Activated T-helper 1 cell treated with anti-CD3 and anti-CD28 coated beads, Interleukin-12 subunit alpha, Interleukin-12 subunit beta, Interleukin-2, Interleukin-4 antibody, amounts not matched to agents 30 ng/mL and 10 ng/mL and 1 ng/mL, durations not matched to agents 14 hours and 24 hours and 36 hours (primary cell): ENCODE measurements at regions of chr16 and their contacts with region 1.

Region 1: GRCh38 chr16:25066747-25067631 is 44.6 kb upstream of the LCMT1 start:
- DNase-seq: peak; percentile 80
- H3K4me3 Mint-ChIP-seq: peak overlapping the region; percentile 89
- H3K27ac Mint-ChIP-seq: peak overlapping the region; percentile 88
- H3K4me1 Mint-ChIP-seq: peaks cover 40% of the 10 kb centered on the region
- H3K27me3 Mint-ChIP-seq: peaks cover 5% of the 10 kb centered on the region

Region 2: GRCh38 chr16:25031441-25032307 is 35.3 kb before region 1 on chr16:
- intact Hi-C with region 1: loop called (anchors 1 kb)
- DNase-seq: peak; percentile 88
- H3K4me3 Mint-ChIP-seq: peak overlapping the region; percentile 85
- H3K27ac Mint-ChIP-seq: peak overlapping the region; percentile 98
- H3K4me1 Mint-ChIP-seq: peaks cover 43% of the 10 kb centered on the region
- H3K27me3 Mint-ChIP-seq: peaks cover under 1% of the 10 kb centered on the region

Region 3: DNA sequence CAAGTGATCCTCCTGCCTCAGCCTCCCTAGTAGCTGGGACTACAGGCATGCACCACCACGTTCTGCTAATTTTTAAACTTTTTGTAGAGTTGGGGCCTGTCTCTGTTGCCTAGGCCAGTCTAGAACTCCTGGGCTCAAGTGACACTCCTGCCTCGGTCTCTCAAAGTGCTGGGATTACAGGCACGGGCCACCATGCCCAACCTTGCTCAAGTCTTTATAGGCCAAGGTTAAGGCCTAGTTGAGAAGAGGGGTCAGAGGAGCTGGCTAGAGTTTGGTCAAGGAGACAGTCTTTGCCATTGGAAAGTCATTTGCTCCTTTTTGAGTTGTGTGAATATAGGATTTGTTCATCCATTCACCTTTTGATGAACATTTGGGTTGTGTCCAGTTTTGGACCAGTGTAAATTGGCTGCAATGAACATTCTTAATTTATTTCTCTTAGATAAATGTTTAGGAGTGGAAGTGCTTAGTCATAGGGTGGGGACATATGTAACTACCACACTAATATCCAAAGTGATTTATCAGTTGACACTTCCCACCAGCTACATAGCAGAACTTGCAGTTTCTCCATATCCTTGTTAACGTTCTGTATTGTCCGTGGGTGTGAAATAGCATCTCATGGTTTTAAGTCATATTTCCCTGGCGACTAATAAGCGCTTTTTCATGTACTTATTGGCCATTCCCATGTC is 21.1 kb before region 1 on chr16:
- intact Hi-C with region 1: loop called (anchors 2 kb)
- DNase-seq: no peak
- H3K4me3 Mint-ChIP-seq: no peak overlapping the region
- H3K27ac Mint-ChIP-seq: peak overlapping the region; percentile 4
- H3K4me1 Mint-ChIP-seq: peaks cover 46% of the 10 kb centered on the region
- H3K27me3 Mint-ChIP-seq: no peaks in the 10 kb centered on the region

Region 4: GRCh38 chr16:25093208-25094061 is 26.4 kb after region 1 on chr16:
- intact Hi-C with region 1: loop called (anchors 1 kb)
- DNase-seq: no peak
- H3K4me3 Mint-ChIP-seq: peak overlapping the region; percentile 56
- H3K27ac Mint-ChIP-seq: peak overlapping the region; percentile 77
- H3K4me1 Mint-ChIP-seq: peaks cover 25% of the 10 kb centered on the region
- H3K27me3 Mint-ChIP-seq: peaks cover 4% of the 10 kb centered on the region

Region 5: DNA sequence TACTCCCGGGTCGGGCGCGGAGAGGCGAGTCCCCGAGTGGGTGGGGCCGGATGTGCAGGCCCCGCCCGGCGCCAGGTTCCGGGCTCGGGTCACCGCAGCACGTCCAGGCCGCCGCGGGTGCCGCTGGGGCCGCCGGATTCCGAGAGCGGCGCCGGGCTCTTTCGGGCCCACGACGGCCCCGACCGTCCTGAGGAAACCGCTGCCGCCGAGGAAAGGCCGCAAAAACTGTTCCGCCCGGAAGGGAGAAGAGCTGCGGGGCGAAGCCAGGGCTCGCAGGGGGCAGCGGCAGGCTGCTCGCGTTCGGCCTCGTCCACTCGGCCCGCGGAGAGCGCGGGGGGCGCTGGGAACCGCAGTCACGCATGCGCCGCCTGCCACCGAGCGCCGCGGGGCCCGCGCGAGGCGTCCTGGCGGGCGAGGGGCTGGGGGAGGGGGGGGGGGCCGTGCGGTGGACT is 190.5 kb after region 1 on chr16 and contains the start of gene ZKSCAN2:
- intact Hi-C with region 1: loop called (anchors 2 kb)
- DNase-seq: peak; percentile 83
- H3K4me3 Mint-ChIP-seq: peak within 1 kb of the TSS; percentile 91
- H3K27ac Mint-ChIP-seq: peak within 1 kb of the TSS; percentile 97
- H3K4me1 Mint-ChIP-seq: peaks cover 53% of the 10 kb centered on the region
- H3K27me3 Mint-ChIP-seq: peaks cover 2% of the 10 kb centered on the region
- total RNA-seq, gene ZKSCAN2: 6.1 and 6.4 TPM in 2 replicates